ENCODE measurements at regions of chr17 and their contacts with region 1.

Region 1: DNA sequence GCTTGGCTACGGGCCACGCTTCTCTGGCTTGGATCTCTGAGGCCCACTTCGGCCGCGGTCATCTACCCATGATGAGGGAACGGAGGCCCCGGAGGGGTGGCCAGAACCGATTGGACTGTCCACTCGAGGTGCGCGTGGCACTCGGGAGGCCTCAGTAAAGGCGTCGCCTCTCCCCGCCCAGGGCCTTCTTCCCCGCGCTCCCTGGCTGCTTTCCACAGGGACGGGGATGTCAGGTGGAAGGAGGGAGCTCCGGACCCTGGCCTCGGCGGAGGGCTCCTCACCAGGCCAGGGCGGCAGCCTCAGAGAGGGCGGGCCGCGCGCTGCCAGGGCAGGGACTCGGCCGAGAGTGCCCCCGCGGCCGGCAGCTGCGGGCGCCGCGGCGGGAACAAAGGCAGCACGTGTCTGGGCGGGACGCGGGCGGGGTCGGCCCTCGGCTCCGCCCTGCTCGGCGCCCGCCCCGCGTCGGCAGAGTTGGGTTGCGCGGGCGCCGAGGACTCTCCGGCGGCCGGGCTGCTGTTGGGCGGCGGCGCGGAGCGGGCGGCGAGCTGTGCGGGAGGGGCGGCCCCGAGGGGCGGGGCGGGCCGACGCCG is 587 bp upstream of the CDK5R1 start:
- DNase-seq: peak; percentile 71
- ATAC-seq: peak; percentile 73
- H3K4me3 Mint-ChIP-seq: peak overlapping the region; percentile 58
- H3K27ac Mint-ChIP-seq: peak overlapping the region; percentile 33; the same call in 1 of the 2 replicates
- H3K4me1 Mint-ChIP-seq: peaks cover 56% of the 10 kb centered on the region
- H3K27me3 Mint-ChIP-seq: no peaks in the 10 kb centered on the region
- CTCF ChIP-seq: no peak

Region 2: GRCh38 chr17:32461853-32462617 is 24.2 kb before region 1 on chr17:
- CTCF ChIA-PET with region 1: interaction called, 20 read pairs
- POLR2A ChIA-PET with region 1: no interaction called
- DNase-seq: peak; percentile 71
- ATAC-seq: peak; percentile 70
- H3K4me3 Mint-ChIP-seq: no peak overlapping the region
- H3K27ac Mint-ChIP-seq: no peak overlapping the region
- H3K4me1 Mint-ChIP-seq: no peaks in the 10 kb centered on the region
- H3K27me3 Mint-ChIP-seq: no peaks in the 10 kb centered on the region
- CTCF ChIP-seq: peak; percentile 26; the same call in 1 of the 2 replicates

Region 3: GRCh38 chr17:32558997-32559650 is 72.9 kb after region 1 on chr17:
- CTCF ChIA-PET with region 1: no interaction called
- POLR2A ChIA-PET with region 1: no interaction called
- DNase-seq: no peak
- ATAC-seq: no peak
- H3K4me3 Mint-ChIP-seq: no peak overlapping the region
- H3K27ac Mint-ChIP-seq: no peak overlapping the region
- H3K4me1 Mint-ChIP-seq: peaks cover 14% of the 10 kb centered on the region
- H3K27me3 Mint-ChIP-seq: no peaks in the 10 kb centered on the region
- CTCF ChIP-seq: no peak